HEK293 (cell line): ENCODE measurements at regions of chr21 and their contacts with region 1.

Region 1: GRCh38 chr21:40610345-40610744 is 236.6 kb downstream of the DSCAM start:
- H3K4me3 ChIP-seq: no peak overlapping the region
- H3K27ac ChIP-seq: no peak overlapping the region
- H3K4me1 ChIP-seq: no peaks in the 10 kb centered on the region
- CTCF ChIP-seq: no peak

Region 2: GRCh38 chr21:40043431-40043830 is 566.9 kb before region 1 on chr21:
- CTCF ChIA-PET with region 1: interaction called, 10 read pairs
- POLR2A ChIA-PET with region 1: no interaction called
- H3K4me3 ChIP-seq: no peak overlapping the region
- H3K27ac ChIP-seq: no peak overlapping the region
- H3K4me1 ChIP-seq: 0 out of 2 replicates have a peak, but pooled peaks cover 4% of the 10 kb centered on the region
- CTCF ChIP-seq: no peak